Activated CD4-positive, alpha-beta memory T cell treated with anti-CD3 and anti-CD28 coated beads, Interleukin-2, amount 10 ng/mL, durations not matched to agents 7 days and 5 days (primary cell): ENCODE measurements at regions of chr19 and their contacts with region 1.

Region 1: GRCh38 chr19:46614114-46614722 is 10.7 kb downstream of the PTGIR start:
- DNase-seq: peak; percentile 81
- H3K4me3 Mint-ChIP-seq: no peak overlapping the region
- H3K27ac Mint-ChIP-seq: peak overlapping the region; percentile 66
- H3K4me1 Mint-ChIP-seq: peaks cover 74% of the 10 kb centered on the region
- H3K27me3 Mint-ChIP-seq: no peaks in the 10 kb centered on the region

Region 2: DNA sequence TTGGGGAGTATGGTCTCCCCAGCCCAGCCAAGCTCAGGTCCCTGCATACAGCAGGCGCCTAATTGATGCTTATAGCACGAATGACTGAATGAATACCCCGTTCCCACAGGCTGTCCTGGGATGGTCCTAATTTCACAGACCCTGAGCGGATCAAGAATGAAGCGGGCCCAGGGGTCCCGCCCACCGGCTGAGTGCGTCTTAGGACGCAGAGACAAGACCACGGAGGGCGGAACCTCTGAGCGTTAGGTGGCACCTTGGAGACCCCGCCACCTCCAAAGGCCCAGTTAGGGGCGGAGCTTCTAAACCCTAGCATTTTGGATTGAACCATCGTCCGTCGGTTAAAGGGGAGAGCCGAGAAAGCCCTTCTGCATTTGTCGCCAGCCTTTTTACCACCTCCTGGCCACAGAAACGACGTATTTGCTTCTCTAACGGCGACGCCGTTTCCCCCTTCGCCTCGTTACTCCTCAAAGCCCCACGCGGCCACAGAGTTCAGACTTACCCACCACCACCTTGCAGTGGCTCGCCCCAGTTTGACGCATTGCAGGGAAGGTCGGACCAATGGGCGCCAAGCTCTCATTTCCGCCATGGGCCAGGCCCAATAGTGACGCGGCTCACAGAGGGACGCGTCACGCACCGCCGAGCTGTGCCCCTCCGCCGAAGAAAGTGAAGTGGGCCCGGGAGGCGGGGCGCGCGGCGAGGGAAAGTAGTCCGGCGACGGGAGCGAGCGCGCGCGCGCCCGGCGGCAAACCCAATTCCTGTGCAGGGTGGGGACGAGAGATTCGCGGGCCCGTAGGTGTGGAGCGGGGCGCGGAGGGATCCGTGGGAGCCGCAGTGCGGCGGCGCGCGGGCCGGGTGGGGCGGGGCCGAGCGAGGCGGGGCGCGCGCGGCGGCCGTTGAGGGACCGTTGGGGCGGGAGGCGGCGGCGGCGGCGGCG is 13.6 kb before region 1 on chr19:
- CTCF ChIA-PET with region 1: interaction called, 99 read pairs
- POLR2A ChIA-PET with region 1: interaction called, 129 read pairs
- DNase-seq: peak; percentile 97
- H3K4me3 Mint-ChIP-seq: peak overlapping the region; percentile 100
- H3K27ac Mint-ChIP-seq: peak overlapping the region; percentile 100
- H3K4me1 Mint-ChIP-seq: peaks cover 38% of the 10 kb centered on the region
- H3K27me3 Mint-ChIP-seq: peaks cover 12% of the 10 kb centered on the region

Region 3: GRCh38 chr19:46634045-46634655 is 19.9 kb after region 1 on chr19:
- CTCF ChIA-PET with region 1: interaction called, 30 read pairs
- POLR2A ChIA-PET with region 1: interaction called, 3 read pairs
- DNase-seq: peak; percentile 96
- H3K4me3 Mint-ChIP-seq: peak overlapping the region; percentile 45
- H3K27ac Mint-ChIP-seq: no peak overlapping the region
- H3K4me1 Mint-ChIP-seq: peaks cover 19% of the 10 kb centered on the region
- H3K27me3 Mint-ChIP-seq: peaks cover 23% of the 10 kb centered on the region